Endothelial cell of umbilical vein (primary cell): ENCODE measurements at regions of chr5 and their contacts with region 1.

Region 1: DNA sequence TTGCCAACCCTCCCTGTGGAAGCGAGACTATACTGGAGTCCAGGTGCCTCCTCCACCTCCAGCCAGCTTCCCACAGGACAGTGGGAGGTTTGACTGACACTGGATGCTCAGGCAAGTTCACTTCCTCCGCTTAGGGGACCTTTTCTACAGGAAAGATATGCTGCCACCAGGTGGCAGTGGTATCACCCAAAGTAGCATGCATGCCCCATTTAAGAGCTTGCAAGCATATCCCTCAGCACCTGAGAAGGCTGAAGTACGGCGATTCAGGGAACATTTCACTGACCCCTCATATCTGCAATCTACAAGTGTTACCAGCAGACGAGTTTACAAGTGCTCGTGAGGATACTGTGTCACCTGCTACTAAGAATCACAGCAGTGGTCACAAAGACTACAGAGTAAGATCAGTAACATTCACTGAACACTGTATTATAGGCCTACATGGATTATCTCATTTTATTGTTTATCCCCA is 75.5 kb downstream of the KLHL3 start:
- DNase-seq: peak; percentile 90
- H3K4me3 ChIP-seq: no peak overlapping the region
- H3K27ac ChIP-seq: no peak overlapping the region
- H3K4me1 ChIP-seq: peaks cover 4% of the 10 kb centered on the region
- H3K27me3 ChIP-seq: no peaks in the 10 kb centered on the region
- CTCF ChIP-seq: peak; percentile 75 to 78
- POLR2A ChIP-seq: no peak

Region 2: DNA sequence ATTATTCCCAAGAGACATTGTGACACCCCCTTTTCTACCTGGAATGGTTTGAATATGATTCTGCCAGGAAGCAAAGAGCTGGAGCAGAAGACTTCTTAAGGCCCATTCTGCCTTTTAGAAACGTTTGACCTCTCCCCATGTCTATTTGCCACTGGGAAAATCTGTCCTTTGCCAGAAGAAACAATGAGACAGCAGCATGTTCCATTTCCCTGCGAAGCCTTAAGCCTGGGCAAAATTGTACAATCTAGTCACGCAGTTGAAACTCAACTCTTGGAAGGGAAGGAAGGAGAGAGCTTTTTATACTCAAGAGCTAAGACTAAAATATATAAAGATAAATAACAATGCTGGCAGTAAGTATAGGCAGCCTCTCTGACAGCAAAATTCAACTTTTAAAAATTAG is 139.1 kb before region 1 on chr5:
- CTCF ChIA-PET with region 1: no interaction called
- POLR2A ChIA-PET with region 1: no interaction called
- dilution Hi-C with region 1: no loop called
- intact Hi-C with region 1: no loop called
- DNase-seq: no peak
- H3K4me3 ChIP-seq: no peak overlapping the region
- H3K27ac ChIP-seq: no peak overlapping the region
- H3K4me1 ChIP-seq: no peaks in the 10 kb centered on the region
- H3K27me3 ChIP-seq: peaks cover 12 to 15% of the 10 kb centered on the region in 2 experiments
- CTCF ChIP-seq: no peak
- POLR2A ChIP-seq: no peak

Region 3: GRCh38 chr5:137641148-137641547 is 19.2 kb before region 1 on chr5:
- CTCF ChIA-PET with region 1: interaction called, 14 read pairs
- POLR2A ChIA-PET with region 1: no interaction called
- dilution Hi-C with region 1: no loop called
- intact Hi-C with region 1: no loop called
- DNase-seq: no peak
- H3K4me3 ChIP-seq: no peak overlapping the region
- H3K27ac ChIP-seq: no peak overlapping the region
- H3K4me1 ChIP-seq: no peaks in the 10 kb centered on the region
- H3K27me3 ChIP-seq: no peaks in the 10 kb centered on the region
- CTCF ChIP-seq: no peak
- POLR2A ChIP-seq: no peak

Region 4: DNA sequence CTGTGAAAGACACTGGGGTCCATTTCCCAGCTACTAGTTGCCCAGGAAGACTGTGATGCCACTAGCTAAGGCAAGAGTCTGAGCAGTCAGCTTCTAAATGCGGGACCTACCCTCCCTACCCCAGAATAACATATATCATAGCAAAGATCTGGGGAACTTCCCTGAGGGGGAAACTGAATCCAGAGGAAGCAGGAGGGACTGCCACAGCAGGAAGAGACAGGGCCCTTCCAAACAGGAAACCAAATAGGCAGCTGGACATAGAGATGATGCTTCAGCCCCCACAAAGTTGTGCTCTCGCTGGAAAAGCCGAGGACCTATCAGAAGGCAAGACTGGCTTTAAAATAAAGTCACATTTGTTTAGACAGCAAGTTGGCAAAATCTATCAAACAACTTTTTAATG is 24.4 kb after region 1 on chr5:
- CTCF ChIA-PET with region 1: interaction called, 25 read pairs
- POLR2A ChIA-PET with region 1: no interaction called
- dilution Hi-C with region 1: no loop called
- intact Hi-C with region 1: no loop called
- DNase-seq: peak; percentile 32
- H3K4me3 ChIP-seq: no peak overlapping the region
- H3K27ac ChIP-seq: no peak overlapping the region
- H3K4me1 ChIP-seq: peaks cover 13% of the 10 kb centered on the region
- H3K27me3 ChIP-seq: no peaks in the 10 kb centered on the region
- CTCF ChIP-seq: no peak
- POLR2A ChIP-seq: no peak

Region 5: GRCh38 chr5:137706841-137707240 is 46.5 kb after region 1 on chr5:
- CTCF ChIA-PET with region 1: interaction called, 20 read pairs
- POLR2A ChIA-PET with region 1: no interaction called
- dilution Hi-C with region 1: no loop called
- intact Hi-C with region 1: no loop called
- DNase-seq: peak; percentile 77
- H3K4me3 ChIP-seq: no peak overlapping the region
- H3K27ac ChIP-seq: peak overlapping the region; percentile 69
- H3K4me1 ChIP-seq: peaks cover 17% of the 10 kb centered on the region
- H3K27me3 ChIP-seq: no peaks in the 10 kb centered on the region
- CTCF ChIP-seq: no peak
- POLR2A ChIP-seq: peak; percentile 32

Region 6: GRCh38 chr5:137728048-137728447 is 67.7 kb after region 1 on chr5:
- CTCF ChIA-PET with region 1: interaction called, 226 read pairs
- POLR2A ChIA-PET with region 1: interaction called, 3 read pairs
- dilution Hi-C with region 1: no loop called
- intact Hi-C with region 1: loop called (anchors 1 kb)
- DNase-seq: peak; percentile 43
- H3K4me3 ChIP-seq: no peak overlapping the region
- H3K27ac ChIP-seq: no peak overlapping the region
- H3K4me1 ChIP-seq: no peaks in the 10 kb centered on the region
- H3K27me3 ChIP-seq: no peaks in the 10 kb centered on the region
- CTCF ChIP-seq: peak in 1 of 2 donors; percentile 21
- POLR2A ChIP-seq: no peak

Region 7: DNA sequence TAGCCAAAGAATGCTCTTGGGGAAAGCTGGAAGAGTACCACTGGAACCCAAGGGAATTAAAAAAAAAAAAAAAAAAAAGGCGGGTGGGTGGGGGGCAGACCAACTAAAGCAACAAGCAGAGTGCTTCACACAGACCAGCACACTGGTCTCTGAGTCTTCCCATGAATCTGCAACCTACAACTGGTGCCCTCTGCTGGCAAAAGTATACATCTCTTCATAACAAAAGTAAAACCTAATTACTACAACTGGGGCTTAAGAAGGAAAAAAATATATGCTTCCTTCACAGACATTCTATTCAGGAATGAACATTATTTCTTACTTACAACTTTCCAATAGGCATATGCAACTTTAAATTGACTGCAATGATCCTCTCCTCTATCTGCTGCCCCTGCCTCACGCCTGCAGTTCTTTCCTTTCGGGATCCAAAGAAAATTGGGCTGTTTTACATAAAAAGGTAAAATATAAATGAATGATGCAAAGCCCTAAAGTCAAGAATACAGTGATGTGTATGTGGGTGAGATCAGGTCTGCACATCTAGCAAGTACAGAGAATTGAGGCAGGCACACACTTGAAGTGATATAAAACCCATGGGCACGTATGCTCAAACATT is 82.8 kb after region 1 on chr5:
- CTCF ChIA-PET with region 1: interaction called, 721 read pairs
- POLR2A ChIA-PET with region 1: interaction called, 5 read pairs
- dilution Hi-C with region 1: no loop called
- intact Hi-C with region 1: loop called (anchors 1 kb)
- DNase-seq: peak; percentile 72
- H3K4me3 ChIP-seq: no peak overlapping the region
- H3K27ac ChIP-seq: no peak overlapping the region
- H3K4me1 ChIP-seq: no peaks in the 10 kb centered on the region
- H3K27me3 ChIP-seq: no peaks in the 10 kb centered on the region
- CTCF ChIP-seq: peak; percentile 65 to 67
- POLR2A ChIP-seq: no peak

Region 8: DNA sequence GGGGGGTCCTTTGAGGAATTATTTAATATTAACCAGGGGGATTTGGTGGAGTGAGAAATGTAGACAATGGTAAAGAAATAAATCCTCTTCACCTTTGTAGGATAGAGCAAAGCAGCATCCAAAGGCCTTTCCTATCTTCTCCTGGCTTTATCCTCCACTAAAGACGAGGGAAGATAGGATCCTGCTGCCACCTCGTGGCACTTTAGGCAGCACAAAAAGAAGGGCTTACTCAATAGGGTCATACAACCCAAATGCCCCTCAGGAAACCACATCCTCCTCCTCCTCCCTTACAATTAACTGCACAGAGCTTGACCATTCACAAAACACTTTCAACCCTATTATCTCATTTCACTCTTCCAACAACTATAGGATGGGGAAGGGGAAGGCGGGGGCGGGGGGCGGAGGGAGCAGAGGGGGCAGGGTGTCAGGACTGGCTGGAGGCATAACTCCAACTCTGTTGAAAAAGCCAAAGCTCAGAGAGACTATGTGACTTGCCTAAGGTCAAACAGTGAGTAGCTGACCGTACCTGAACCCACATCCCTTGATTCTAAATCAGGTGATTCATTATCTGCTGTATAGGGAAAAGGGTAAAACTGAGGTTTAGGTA is 161.9 kb after region 1 on chr5:
- CTCF ChIA-PET with region 1: no interaction called
- POLR2A ChIA-PET with region 1: no interaction called
- dilution Hi-C with region 1: no loop called
- intact Hi-C with region 1: loop called (anchors 1 kb)
- DNase-seq: peak; percentile 31
- H3K4me3 ChIP-seq: no peak overlapping the region
- H3K27ac ChIP-seq: no peak overlapping the region
- H3K4me1 ChIP-seq: no peaks in the 10 kb centered on the region
- H3K27me3 ChIP-seq: peaks cover 10 to 19% of the 10 kb centered on the region in 2 experiments
- CTCF ChIP-seq: peak; percentile 17 to 51
- POLR2A ChIP-seq: no peak

Region 9: DNA sequence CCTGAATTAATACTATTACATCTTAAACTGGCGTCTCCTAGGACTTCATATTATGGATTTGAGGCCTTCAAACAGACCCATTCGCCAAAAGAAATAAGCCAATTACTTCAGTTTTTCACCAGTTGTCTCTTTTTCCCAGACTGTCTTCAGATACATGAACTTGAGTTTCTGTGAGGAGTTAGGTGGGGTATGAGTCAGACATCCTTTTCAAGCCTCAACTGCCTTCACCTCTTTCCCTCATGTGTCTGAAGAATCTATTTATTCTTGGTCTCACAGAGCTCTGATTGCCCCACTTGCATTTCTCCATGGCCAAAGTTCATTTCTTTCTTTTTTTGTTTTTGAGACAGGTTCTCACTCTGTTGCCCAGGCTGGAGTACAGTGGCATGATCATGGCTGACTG is 436.0 kb after region 1 on chr5:
- CTCF ChIA-PET with region 1: no interaction called
- POLR2A ChIA-PET with region 1: no interaction called
- dilution Hi-C with region 1: no loop called
- intact Hi-C with region 1: no loop called
- DNase-seq: no peak
- H3K4me3 ChIP-seq: no peak overlapping the region
- H3K27ac ChIP-seq: no peak overlapping the region
- H3K4me1 ChIP-seq: no peaks in the 10 kb centered on the region
- H3K27me3 ChIP-seq: peaks cover 11 to 36% of the 10 kb centered on the region in 2 experiments
- CTCF ChIP-seq: no peak
- POLR2A ChIP-seq: no peak

Region 10: GRCh38 chr5:138752951-138753793 is 1092.8 kb after region 1 on chr5 and contains the start of gene CTNNA1:
- CTCF ChIA-PET with region 1: no interaction called
- POLR2A ChIA-PET with region 1: no interaction called
- dilution Hi-C with region 1: no loop called
- intact Hi-C with region 1: no loop called
- DNase-seq: peak; percentile 61
- H3K4me3 ChIP-seq: peak within 1 kb of the TSS; percentile 72 to 94 (median 86)
- H3K27ac ChIP-seq: peak within 1 kb of the TSS; percentile 97
- H3K4me1 ChIP-seq: peaks cover 14% of the 10 kb centered on the region
- H3K27me3 ChIP-seq: no peaks in the 10 kb centered on the region
- CTCF ChIP-seq: no peak
- POLR2A ChIP-seq: peak; percentile 89
- total RNA-seq, gene CTNNA1: 394 and 420 TPM in 2 replicates